ENCODE measurements at regions of chr1 and their contacts with region 1.

Region 1: DNA sequence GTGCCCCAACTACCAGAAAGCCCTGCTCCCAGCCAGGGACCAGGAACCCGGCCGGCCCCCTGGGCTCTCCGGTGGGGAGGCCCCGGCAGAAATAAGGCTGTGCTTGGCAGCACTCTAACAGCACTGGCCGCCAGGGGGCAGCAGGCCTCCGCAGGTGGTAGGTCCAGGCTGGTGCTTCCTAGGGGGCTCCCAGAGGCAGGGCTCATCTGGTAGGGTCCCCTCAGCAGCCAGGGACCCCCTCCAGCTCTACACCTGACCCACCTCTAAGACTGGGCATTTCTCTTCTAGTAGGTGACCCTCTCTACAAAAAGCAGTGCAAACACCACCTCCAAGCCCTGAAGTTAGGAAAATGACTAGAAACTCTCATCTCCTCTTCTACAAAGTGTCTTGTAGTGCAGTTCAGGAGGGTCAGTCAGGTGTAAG is 85.6 kb downstream of the STUM start:
- DNase-seq: peak; percentile 43 to 96
- H3K4me3 ChIP-seq: no peak overlapping the region
- H3K27ac ChIP-seq: no peak overlapping the region
- H3K4me1 ChIP-seq: peaks cover 0 to 7% (median 4%) of the 10 kb centered on the region in 4 experiments; a peak in 5 of 7 replicates
- H3K27me3 ChIP-seq: no peaks in the 10 kb centered on the region
- CTCF ChIP-seq: peak; percentile 88 to 96 (median 96)
- EP300 ChIP-seq: no peak
- POLR2A ChIP-seq: no peak
- RAD21 ChIP-seq: peak; percentile 96 to 99

Region 2: GRCh38 chr1:226575739-226576378 is 58.3 kb before region 1 on chr1:
- CTCF ChIA-PET with region 1: no interaction called
- POLR2A ChIA-PET with region 1: no interaction called
- DNase-seq: no peak
- H3K4me3 ChIP-seq: no peak overlapping the region
- H3K27ac ChIP-seq: no peak overlapping the region
- H3K4me1 ChIP-seq: peaks cover 0 to 4% (median 0%) of the 10 kb centered on the region in 4 experiments; a peak in 1 of 7 replicates
- H3K27me3 ChIP-seq: no peaks in the 10 kb centered on the region
- CTCF ChIP-seq: no peak
- EP300 ChIP-seq: no peak
- POLR2A ChIP-seq: no peak
- RAD21 ChIP-seq: no peak

Region 3: DNA sequence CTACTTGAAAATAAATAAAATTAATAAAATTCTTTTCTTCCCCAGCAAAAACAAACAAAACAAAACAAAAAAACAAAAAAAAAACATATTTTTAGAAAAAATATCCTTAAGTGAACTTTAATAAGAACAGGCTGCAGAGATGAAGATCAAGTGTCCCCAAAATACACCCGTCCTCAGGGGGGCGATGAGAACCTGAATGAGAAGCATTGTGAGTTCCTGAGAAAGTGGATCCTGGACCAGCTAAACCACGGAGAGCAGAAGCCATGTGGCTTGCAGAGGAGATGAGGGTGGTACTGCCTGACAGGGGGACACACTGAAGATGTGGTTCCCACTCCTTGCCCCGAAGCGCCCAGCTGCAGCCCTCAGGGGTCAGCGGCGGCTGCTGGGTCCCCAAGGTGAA is 15.6 kb after region 1 on chr1:
- CTCF ChIA-PET with region 1: interaction called, 27 read pairs
- POLR2A ChIA-PET with region 1: interaction called, 3 read pairs
- DNase-seq: no peak
- H3K4me3 ChIP-seq: no peak overlapping the region
- H3K27ac ChIP-seq: no peak overlapping the region
- H3K4me1 ChIP-seq: peaks cover 4 to 18% (median 13%) of the 10 kb centered on the region in 4 experiments
- H3K27me3 ChIP-seq: no peaks in the 10 kb centered on the region; a peak in 1 of 7 replicates
- CTCF ChIP-seq: peak in 2 of 3 experiments; percentile 44 to 57; a peak in 3 of 4 replicates
- EP300 ChIP-seq: no peak
- POLR2A ChIP-seq: no peak
- RAD21 ChIP-seq: peak; percentile 62 to 70

Region 4: GRCh38 chr1:226679853-226680516 is 45.8 kb after region 1 on chr1:
- CTCF ChIA-PET with region 1: interaction called, 27 read pairs
- POLR2A ChIA-PET with region 1: no interaction called
- DNase-seq: peak; percentile 84 to 97
- H3K4me3 ChIP-seq: peak overlapping the region; percentile 2 to 51 (median 32); a peak in 6 of 8 replicates
- H3K27ac ChIP-seq: peak overlapping the region; percentile 57; the same call in 1 of the 2 replicates
- H3K4me1 ChIP-seq: peaks cover 6 to 19% (median 13%) of the 10 kb centered on the region in 4 experiments; a peak in 6 of 7 replicates
- H3K27me3 ChIP-seq: peaks cover 0 to 29% (median 7%) of the 10 kb centered on the region in 4 experiments; a peak in 4 of 7 replicates
- CTCF ChIP-seq: no peak
- EP300 ChIP-seq: peak in 1 of 2 experiments; percentile 92; a peak in 2 of 3 replicates
- POLR2A ChIP-seq: peak in 1 of 2 experiments; percentile 70; a peak in 2 of 3 replicates
- RAD21 ChIP-seq: no peak; a peak in 1 of 4 replicates

Region 5: GRCh38 chr1:226814751-226815496 is 180.7 kb after region 1 on chr1:
- CTCF ChIA-PET with region 1: interaction called, 12 read pairs
- POLR2A ChIA-PET with region 1: no interaction called
- DNase-seq: no peak
- H3K4me3 ChIP-seq: no peak overlapping the region
- H3K27ac ChIP-seq: no peak overlapping the region
- H3K4me1 ChIP-seq: peaks cover 0 to 3% (median 1%) of the 10 kb centered on the region in 4 experiments; a peak in 1 of 7 replicates
- H3K27me3 ChIP-seq: no peaks in the 10 kb centered on the region
- CTCF ChIP-seq: no peak
- EP300 ChIP-seq: no peak
- POLR2A ChIP-seq: no peak
- RAD21 ChIP-seq: no peak

Region 6: GRCh38 chr1:226820941-226821718 is 187.0 kb after region 1 on chr1:
- CTCF ChIA-PET with region 1: interaction called, 184 read pairs
- POLR2A ChIA-PET with region 1: no interaction called
- DNase-seq: no peak
- H3K4me3 ChIP-seq: no peak overlapping the region
- H3K27ac ChIP-seq: no peak overlapping the region
- H3K4me1 ChIP-seq: no peaks in the 10 kb centered on the region
- H3K27me3 ChIP-seq: no peaks in the 10 kb centered on the region
- CTCF ChIP-seq: no peak
- EP300 ChIP-seq: no peak
- POLR2A ChIP-seq: no peak
- RAD21 ChIP-seq: no peak

Region 7: GRCh38 chr1:226827968-226828513 is 193.9 kb after region 1 on chr1:
- CTCF ChIA-PET with region 1: interaction called, 184 read pairs
- POLR2A ChIA-PET with region 1: no interaction called
- DNase-seq: peak; percentile 78 to 97
- H3K4me3 ChIP-seq: no peak overlapping the region
- H3K27ac ChIP-seq: no peak overlapping the region
- H3K4me1 ChIP-seq: no peaks in the 10 kb centered on the region; a peak in 2 of 7 replicates
- H3K27me3 ChIP-seq: no peaks in the 10 kb centered on the region
- CTCF ChIP-seq: peak; percentile 91 to 96 (median 94)
- EP300 ChIP-seq: peak in 1 of 2 experiments; percentile 62; a peak in 1 of 3 replicates
- POLR2A ChIP-seq: no peak
- RAD21 ChIP-seq: peak; percentile 96 to 100

Region 8: GRCh38 chr1:227032396-227032795 is 398.2 kb after region 1 on chr1:
- CTCF ChIA-PET with region 1: no interaction called
- POLR2A ChIA-PET with region 1: no interaction called
- DNase-seq: peak in 1 of 2 experiments; percentile 7
- H3K4me3 ChIP-seq: no peak overlapping the region
- H3K27ac ChIP-seq: no peak overlapping the region
- H3K4me1 ChIP-seq: no peaks in the 10 kb centered on the region; a peak in 1 of 7 replicates
- H3K27me3 ChIP-seq: no peaks in the 10 kb centered on the region
- CTCF ChIP-seq: no peak
- EP300 ChIP-seq: no peak
- POLR2A ChIP-seq: no peak
- RAD21 ChIP-seq: no peak